CD8-positive, alpha-beta memory T cell (primary cell): ENCODE measurements at regions of chr9 and their contacts with region 1.

Region 1: DNA sequence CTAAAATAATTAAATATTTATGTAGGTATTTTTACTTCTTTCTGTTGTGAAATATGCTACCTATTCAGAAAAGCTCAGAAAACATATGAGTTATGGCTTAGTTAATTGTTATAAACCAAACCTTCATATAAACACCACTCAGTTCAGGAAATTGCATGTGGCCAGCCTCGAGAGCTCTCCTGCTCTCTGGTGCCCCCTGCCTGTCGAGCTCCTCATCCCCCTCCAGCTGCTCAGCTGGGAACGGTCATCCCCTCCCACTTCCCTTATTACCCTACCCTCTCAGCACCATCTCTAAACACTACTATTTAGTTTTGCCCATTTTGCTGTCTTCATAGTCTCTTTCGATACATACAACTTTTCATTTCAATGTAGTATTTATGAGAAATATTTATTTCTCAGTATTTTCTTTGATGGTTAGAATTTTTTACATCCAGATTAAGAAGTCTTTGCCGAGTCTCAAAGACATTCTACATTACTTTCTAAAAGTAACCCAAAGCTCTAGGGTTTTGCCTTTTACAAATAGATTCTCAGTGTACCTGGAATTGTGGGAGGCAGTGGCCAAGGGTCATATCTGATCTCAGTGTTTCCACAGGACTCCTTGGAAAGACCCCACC is 51.2 kb upstream of the SEMA4D start:
- DNase-seq: peak; percentile 76 to 86 (median 82)
- H3K4me3 ChIP-seq: no peak overlapping the region
- H3K4me3 Mint-ChIP-seq: peak overlapping the region in 1 of 7 donors; percentile 11
- H3K27ac ChIP-seq: no peak overlapping the region
- H3K27ac Mint-ChIP-seq: peak overlapping the region in 6 of 8 donors; percentile 5 to 72 (median 52)
- H3K4me1 ChIP-seq: peaks cover 15% of the 10 kb centered on the region
- H3K4me1 Mint-ChIP-seq: peaks cover 7 to 14% (median 13%) of the 10 kb centered on the region in 3 donors
- H3K27me3 ChIP-seq: no peaks in the 10 kb centered on the region
- H3K27me3 Mint-ChIP-seq: no peaks in the 10 kb centered on the region

Region 2: DNA sequence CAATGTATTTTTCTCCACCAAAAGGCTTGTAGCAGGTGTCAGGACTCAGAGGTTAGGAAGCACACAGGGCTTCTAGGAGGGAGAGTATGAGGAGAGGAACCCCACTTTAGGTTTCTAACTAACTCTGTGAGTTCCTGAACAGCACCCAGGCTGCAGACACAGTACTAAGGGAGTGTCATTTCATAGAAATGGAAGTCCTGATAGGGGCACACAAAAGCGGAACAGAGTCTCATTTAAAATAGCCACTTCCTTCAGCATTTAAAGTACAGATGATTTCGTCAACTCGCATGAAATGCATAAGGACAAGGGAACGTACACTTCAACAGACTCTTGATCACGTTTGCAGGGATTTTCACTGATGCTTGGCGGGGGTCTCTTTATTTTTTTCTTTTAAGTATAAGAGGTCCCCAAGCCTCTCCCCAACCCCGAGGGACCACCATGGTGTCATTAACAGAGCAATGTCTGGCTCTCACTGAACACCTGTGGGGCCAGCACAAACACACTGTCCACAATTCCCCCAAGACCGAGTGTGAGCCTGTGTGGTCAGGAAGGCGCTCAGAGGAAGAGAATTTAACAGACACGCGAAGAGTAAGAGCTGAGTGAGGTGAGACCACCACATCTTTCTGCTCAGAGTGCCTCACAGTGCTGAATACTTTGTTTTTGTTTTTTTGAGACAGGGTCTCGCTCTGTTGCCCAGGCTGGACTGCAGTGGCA is 148.6 kb before region 1 on chr9:
- CTCF ChIA-PET with region 1: interaction called, 11 read pairs
- POLR2A ChIA-PET with region 1: interaction called, 3 read pairs
- DNase-seq: no peak
- H3K4me3 ChIP-seq: no peak overlapping the region
- H3K4me3 Mint-ChIP-seq: no peak overlapping the region
- H3K27ac ChIP-seq: no peak overlapping the region
- H3K27ac Mint-ChIP-seq: peak overlapping the region; percentile 8 to 94 (median 66)
- H3K4me1 ChIP-seq: peaks cover under 1% of the 10 kb centered on the region
- H3K4me1 Mint-ChIP-seq: peaks cover 23 to 37% (median 34%) of the 10 kb centered on the region in 3 donors
- H3K27me3 ChIP-seq: no peaks in the 10 kb centered on the region
- H3K27me3 Mint-ChIP-seq: peaks cover 0 to 2% of the 10 kb centered on the region in 2 donors

Region 3: GRCh38 chr9:89428901-89429890 is 119.9 kb before region 1 on chr9:
- CTCF ChIA-PET with region 1: interaction called, 184 read pairs
- POLR2A ChIA-PET with region 1: interaction called, 11 read pairs
- DNase-seq: peak in 4 of 5 donors; percentile 51 to 79 (median 72)
- H3K4me3 ChIP-seq: no peak overlapping the region
- H3K4me3 Mint-ChIP-seq: peak overlapping the region; percentile 7 to 66 (median 50)
- H3K27ac ChIP-seq: no peak overlapping the region
- H3K27ac Mint-ChIP-seq: peak overlapping the region; percentile 64 to 96 (median 92)
- H3K4me1 ChIP-seq: peaks cover 94% of the 10 kb centered on the region
- H3K4me1 Mint-ChIP-seq: peaks cover 86 to 100% (median 94%) of the 10 kb centered on the region in 3 donors
- H3K27me3 ChIP-seq: no peaks in the 10 kb centered on the region
- H3K27me3 Mint-ChIP-seq: peaks cover 0 to 1% of the 10 kb centered on the region in 2 donors

Region 4: GRCh38 chr9:89455356-89455824 is 93.7 kb before region 1 on chr9:
- CTCF ChIA-PET with region 1: interaction called, 22 read pairs
- POLR2A ChIA-PET with region 1: interaction called, 3 read pairs
- DNase-seq: peak in 2 of 5 donors; percentile 68 to 69
- H3K4me3 ChIP-seq: peak overlapping the region; percentile 38
- H3K4me3 Mint-ChIP-seq: peak overlapping the region; percentile 34 to 88 (median 78)
- H3K27ac ChIP-seq: peak overlapping the region; percentile 26
- H3K27ac Mint-ChIP-seq: peak overlapping the region; percentile 93 to 99 (median 97)
- H3K4me1 ChIP-seq: peaks cover 89% of the 10 kb centered on the region
- H3K4me1 Mint-ChIP-seq: peaks cover 85 to 95% (median 92%) of the 10 kb centered on the region in 3 donors
- H3K27me3 ChIP-seq: no peaks in the 10 kb centered on the region
- H3K27me3 Mint-ChIP-seq: no peaks in the 10 kb centered on the region

Region 5: DNA sequence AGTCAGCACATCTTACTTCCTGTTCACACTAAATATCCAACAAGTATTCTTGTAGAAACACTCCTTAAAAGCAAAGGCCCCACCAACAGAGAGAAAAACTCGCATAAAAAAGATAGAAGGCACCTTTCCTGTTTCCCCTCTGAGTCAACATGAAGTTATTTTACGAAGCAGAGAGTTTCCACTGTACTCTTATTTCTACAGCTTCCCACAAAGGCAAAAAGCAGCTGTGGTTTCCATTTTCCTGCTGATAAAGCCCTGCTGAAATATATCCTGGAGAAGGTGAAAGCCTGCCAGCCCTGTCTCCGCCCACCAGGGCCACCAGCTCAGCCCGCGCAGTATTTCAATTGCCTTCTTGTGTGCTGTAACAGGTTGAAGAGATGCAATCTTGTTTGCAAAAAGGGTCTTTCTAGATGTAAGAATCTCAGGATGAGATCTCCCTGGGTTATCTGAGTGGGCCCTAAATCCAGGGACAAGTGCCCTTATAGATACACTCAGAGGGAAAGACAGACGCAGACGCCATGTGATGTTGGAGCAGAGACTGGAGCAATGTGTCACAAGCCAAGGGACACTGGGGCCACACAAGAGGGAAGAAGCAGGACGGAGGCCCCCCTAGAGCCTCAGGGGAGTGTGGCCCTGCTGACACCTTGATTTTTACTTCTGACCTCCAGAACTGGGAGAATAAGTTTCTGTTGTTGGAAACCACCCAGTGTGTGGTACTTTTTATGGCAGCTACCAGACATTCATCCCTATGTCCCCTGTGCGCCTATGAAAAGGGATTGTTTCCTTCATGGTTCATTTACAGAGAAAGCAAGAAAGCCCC is 71.1 kb before region 1 on chr9:
- CTCF ChIA-PET with region 1: interaction called, 29 read pairs
- POLR2A ChIA-PET with region 1: interaction called, 4 read pairs
- DNase-seq: peak in 3 of 5 donors; percentile 33 to 72 (median 67)
- H3K4me3 ChIP-seq: peak overlapping the region; percentile 62
- H3K4me3 Mint-ChIP-seq: peak overlapping the region; percentile 85 to 98 (median 95)
- H3K27ac ChIP-seq: no peak overlapping the region
- H3K27ac Mint-ChIP-seq: peak overlapping the region; percentile 90 to 99 (median 96)
- H3K4me1 ChIP-seq: peaks cover 86% of the 10 kb centered on the region
- H3K4me1 Mint-ChIP-seq: peaks cover 88 to 96% (median 90%) of the 10 kb centered on the region in 3 donors
- H3K27me3 ChIP-seq: no peaks in the 10 kb centered on the region
- H3K27me3 Mint-ChIP-seq: no peaks in the 10 kb centered on the region

Region 6: DNA sequence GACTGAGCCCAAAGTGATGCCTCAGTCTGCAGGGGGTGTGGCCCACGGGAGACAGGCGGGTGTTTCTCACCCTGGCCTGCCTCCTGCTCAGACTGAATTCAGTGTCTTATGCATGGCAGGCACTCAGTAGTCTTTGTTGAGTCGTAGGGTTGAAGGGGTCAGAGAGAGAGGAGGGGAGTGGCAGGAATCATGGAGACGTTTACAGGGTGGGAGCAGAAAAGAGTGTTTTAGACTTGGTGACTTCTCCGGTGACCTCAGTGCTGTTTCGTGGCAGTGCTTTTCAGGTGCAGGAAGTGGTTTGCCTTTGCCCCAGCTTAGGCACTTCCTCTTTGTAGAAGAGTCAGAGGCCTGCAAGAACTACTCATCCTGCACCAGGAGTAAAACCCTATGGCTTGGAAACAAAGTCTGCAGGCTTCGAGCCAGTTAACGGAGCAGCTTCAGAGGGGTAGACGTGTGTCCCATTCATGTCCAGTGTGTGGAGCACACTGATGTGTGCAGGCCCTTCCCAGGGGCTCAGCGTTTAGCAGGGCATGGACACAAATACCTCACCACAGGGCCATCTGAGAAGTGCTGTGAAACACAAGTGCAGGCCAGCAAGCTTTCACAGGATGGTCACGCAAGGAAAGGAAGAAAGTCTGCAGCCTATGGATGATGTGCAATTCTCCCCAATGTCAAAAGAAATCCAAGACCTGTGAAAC is 26.7 kb before region 1 on chr9:
- CTCF ChIA-PET with region 1: interaction called, 29 read pairs
- POLR2A ChIA-PET with region 1: interaction called, 4 read pairs
- DNase-seq: peak; percentile 62 to 89 (median 84)
- H3K4me3 ChIP-seq: peak overlapping the region; percentile 33
- H3K4me3 Mint-ChIP-seq: peak overlapping the region; percentile 43 to 94 (median 74)
- H3K27ac ChIP-seq: peak overlapping the region; percentile 68
- H3K27ac Mint-ChIP-seq: peak overlapping the region; percentile 89 to 99 (median 96)
- H3K4me1 ChIP-seq: peaks cover 99% of the 10 kb centered on the region
- H3K4me1 Mint-ChIP-seq: peaks cover 92 to 99% (median 98%) of the 10 kb centered on the region in 3 donors
- H3K27me3 ChIP-seq: no peaks in the 10 kb centered on the region
- H3K27me3 Mint-ChIP-seq: no peaks in the 10 kb centered on the region

Region 7: DNA sequence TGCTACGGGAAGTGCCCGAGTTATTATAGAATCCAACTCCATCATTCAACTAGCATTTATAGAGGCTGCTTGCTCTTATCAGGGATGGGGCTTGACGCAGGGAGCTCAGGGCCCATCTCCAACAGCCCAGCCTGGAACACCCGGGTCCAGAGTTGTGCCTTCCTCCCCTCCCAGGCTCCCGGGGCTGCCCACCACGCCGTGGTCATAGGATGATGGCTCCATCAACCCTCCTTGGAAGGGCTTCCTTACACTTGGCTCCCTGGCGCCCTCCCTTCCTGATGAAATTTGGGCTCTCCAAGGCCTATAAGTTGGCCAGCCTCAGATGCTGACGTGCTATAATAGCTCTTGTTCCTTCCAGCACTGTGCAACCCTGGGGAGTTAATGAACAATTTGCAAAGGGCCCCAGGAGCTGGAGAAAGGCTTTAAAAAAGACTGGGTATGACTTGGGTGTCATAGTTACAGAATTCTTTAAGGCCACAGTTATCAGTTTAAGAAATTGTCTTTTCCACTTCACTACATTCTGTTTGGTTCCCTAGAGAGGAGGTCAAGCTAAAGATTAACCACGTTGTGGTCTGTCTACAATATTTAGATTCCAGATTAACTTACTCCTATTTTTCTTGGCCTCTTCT is 13.2 kb after region 1 on chr9:
- CTCF ChIA-PET with region 1: no interaction called
- POLR2A ChIA-PET with region 1: no interaction called
- DNase-seq: no peak
- H3K4me3 ChIP-seq: no peak overlapping the region
- H3K4me3 Mint-ChIP-seq: no peak overlapping the region
- H3K27ac ChIP-seq: no peak overlapping the region
- H3K27ac Mint-ChIP-seq: no peak overlapping the region
- H3K4me1 ChIP-seq: peaks cover 8% of the 10 kb centered on the region
- H3K4me1 Mint-ChIP-seq: peaks cover 3 to 11% (median 6%) of the 10 kb centered on the region in 3 donors
- H3K27me3 ChIP-seq: no peaks in the 10 kb centered on the region
- H3K27me3 Mint-ChIP-seq: peaks cover 5 to 17% of the 10 kb centered on the region in 2 donors